ENCODE measurements at regions of chr11 and their contacts with region 1.

Region 1: DNA sequence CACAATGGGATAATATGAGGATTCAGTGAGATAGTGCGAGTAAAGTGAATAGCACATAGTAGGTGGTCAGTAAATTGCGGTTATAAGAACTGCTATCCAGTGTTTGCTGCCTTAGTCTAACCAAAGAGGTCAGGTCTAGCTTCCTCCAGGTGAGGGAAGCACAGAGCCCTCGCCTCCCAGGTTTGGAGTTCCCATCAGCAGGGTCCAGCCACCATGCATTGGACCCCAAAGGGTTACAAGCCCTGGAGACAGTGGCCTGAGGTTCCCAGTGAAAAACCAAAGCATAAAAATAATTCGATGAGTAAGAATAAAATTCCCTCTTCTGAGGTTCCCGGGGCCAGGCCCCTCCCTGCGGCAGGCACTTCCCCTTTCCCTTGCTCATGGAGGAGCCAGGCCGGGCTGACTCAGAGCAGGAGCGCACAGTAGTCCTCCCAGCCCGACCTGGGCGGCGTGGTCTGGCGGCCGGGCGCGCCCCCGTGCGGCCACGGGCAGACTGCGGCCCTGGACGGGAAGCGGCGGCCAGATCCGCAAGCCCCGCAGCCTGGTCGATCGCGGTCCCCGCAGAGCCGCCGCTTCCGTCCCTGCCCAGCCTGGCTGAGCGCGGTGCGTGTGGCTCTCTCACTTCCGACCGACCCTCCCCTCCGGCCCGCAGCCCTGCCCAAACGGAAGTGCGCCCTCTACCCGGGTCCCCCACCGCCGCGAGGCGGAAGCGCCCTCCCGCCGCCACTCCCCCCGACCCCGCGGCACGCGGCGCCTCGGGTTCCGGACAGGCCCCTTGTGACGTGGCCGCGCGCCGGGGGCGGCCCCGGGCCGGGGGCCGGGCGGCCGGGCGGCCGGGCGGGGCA is at the start of gene SLC39A13:
- DNase-seq: peak; percentile 95
- H3K4me3 Mint-ChIP-seq: peak within 1 kb of the TSS; percentile 86
- H3K27ac Mint-ChIP-seq: peak within 1 kb of the TSS; percentile 95
- H3K4me1 Mint-ChIP-seq: peaks cover 17% of the 10 kb centered on the region
- H3K27me3 Mint-ChIP-seq: no peaks in the 10 kb centered on the region
- total RNA-seq, gene SLC39A13: 17.7 to 18.0 TPM

Region 2: GRCh38 chr11:47269002-47269828 is 138.8 kb before region 1 on chr11:
- CTCF ChIA-PET with region 1: interaction called, 5 read pairs
- POLR2A ChIA-PET with region 1: no interaction called
- intact Hi-C with region 1: loop called (anchors 1 kb)
- DNase-seq: peak; percentile 90
- H3K4me3 Mint-ChIP-seq: peak overlapping the region; percentile 84
- H3K27ac Mint-ChIP-seq: peak overlapping the region; percentile 99
- H3K4me1 Mint-ChIP-seq: peaks cover 44% of the 10 kb centered on the region
- H3K27me3 Mint-ChIP-seq: no peaks in the 10 kb centered on the region

Region 3: GRCh38 chr11:47394322-47395222 is 13.4 kb before region 1 on chr11:
- CTCF ChIA-PET with region 1: interaction called, 9 read pairs
- POLR2A ChIA-PET with region 1: no interaction called
- intact Hi-C with region 1: loop called (anchors 1 kb)
- DNase-seq: peak; percentile 76
- H3K4me3 Mint-ChIP-seq: peak overlapping the region; percentile 52
- H3K27ac Mint-ChIP-seq: peak overlapping the region; percentile 82
- H3K4me1 Mint-ChIP-seq: peaks cover 23% of the 10 kb centered on the region
- H3K27me3 Mint-ChIP-seq: no peaks in the 10 kb centered on the region

Measured in activated CD4-positive, alpha-beta memory T cell treated with anti-CD3 and anti-CD28 coated beads for 36 hours (primary cell).